Heart left ventricle (tissue), 16 donors: ENCODE measurements at regions of chr1 and their contacts with region 1.

Region 1: DNA sequence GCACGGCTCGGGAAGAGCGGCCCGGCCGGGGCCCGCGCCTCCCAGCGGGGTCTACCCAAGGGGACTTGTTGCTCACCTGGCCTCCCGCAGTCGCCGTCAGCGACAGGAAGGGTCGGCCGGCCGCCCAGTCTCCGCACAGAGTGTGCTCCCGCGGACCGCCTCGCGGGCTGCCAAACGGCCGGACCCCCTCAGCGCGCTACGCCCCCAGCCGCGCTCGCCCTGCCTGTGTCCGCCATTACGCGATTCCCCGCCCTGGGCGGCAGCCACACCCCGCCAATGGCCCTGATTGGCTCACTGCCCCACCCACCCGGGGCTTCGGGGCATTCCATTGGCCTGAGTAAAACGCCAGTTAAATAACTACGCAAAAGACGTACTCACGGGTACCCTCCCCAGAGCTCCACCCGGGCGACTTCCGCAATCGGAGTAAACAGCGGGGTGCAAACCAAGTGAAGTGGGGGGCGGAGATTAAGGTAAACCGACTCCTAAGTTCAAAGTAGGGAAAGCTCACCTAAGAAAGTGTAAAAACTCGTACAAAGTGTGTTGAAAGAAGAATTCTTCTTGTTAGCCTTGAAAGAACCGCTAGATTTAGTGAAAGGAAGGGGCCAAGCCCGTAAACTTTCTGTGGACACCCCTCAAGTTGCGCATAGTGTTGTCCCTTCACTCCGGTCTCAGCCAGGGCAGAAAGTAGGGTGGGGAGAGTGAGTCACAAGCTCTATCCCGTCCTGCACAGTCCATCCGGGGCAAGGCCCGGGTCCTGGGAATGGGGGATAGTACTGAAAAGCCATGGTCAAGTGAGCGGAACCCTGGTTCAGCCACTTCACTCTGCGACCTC is at the start of gene WASF2:
- DNase-seq: peak; percentile 97 to 98 (median 98)
- ATAC-seq: peak; percentile 93 to 97 (median 96)
- H3K4me3 ChIP-seq: peak within 1 kb of the TSS; percentile 77 to 100 (median 96)
- H3K27ac ChIP-seq: peak within 1 kb of the TSS; percentile 98 to 100 (median 100)
- H3K4me1 ChIP-seq: peaks cover 5 to 62% (median 37%) of the 10 kb centered on the region in 12 donors
- H3K27me3 ChIP-seq: no peaks in the 10 kb centered on the region
- CTCF ChIP-seq: peak in 1 of 12 donors; percentile 5
- POLR2A ChIP-seq: peak; percentile 83 to 96
- total RNA-seq, gene WASF2: 27.5 to 103 (median 47.9) TPM

Region 2: DNA sequence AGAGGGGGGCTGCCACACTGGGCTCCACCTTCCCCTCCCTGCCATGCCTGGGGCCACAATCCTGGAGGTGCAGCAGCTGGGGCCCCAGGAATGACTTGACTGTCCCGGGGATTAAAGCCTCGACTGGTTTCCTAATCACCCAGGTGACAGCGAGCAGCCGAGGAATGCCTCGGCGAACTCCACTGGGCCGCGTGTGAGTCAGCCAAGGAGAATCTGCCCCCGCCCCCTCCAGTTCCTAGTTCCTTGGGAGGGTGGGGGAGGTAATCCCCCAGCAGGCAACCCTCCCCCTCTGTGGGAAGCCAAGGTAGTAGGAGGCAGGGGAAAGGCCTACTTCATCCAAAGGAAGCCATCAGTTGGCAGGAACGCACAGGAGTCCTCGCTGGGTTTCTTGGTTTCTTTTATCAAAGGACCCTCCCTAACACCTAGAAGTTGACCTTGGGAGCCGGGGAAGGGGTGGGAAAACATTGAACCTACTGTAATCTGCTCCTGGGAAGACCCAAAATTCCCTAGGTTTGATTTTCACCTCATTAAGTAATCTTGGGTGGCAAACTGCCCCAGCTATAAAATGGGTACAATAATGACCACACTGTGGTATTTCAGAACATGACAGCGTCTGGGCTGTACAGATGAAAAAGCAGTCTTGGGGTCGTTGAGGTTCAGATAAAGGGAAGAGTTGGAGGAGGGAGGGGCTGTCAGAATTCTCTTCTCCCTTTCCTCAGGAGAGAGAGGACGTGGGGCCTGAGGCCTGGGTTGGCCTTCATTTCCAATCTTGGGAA is 478.9 kb before region 1 on chr1:
- intact Hi-C with region 1: no loop called
- DNase-seq: peak in 2 of 5 donors; percentile 34 to 56
- ATAC-seq: no peak
- H3K4me3 ChIP-seq: peak overlapping the region in 10 of 12 donors; percentile 24 to 64 (median 54)
- H3K27ac ChIP-seq: peak overlapping the region in 11 of 12 donors; percentile 39 to 92 (median 82)
- H3K4me1 ChIP-seq: peaks cover 0 to 51% (median 16%) of the 10 kb centered on the region in 12 donors
- H3K27me3 ChIP-seq: no peaks in the 10 kb centered on the region
- CTCF ChIP-seq: no peak
- POLR2A ChIP-seq: no peak

Region 3: DNA sequence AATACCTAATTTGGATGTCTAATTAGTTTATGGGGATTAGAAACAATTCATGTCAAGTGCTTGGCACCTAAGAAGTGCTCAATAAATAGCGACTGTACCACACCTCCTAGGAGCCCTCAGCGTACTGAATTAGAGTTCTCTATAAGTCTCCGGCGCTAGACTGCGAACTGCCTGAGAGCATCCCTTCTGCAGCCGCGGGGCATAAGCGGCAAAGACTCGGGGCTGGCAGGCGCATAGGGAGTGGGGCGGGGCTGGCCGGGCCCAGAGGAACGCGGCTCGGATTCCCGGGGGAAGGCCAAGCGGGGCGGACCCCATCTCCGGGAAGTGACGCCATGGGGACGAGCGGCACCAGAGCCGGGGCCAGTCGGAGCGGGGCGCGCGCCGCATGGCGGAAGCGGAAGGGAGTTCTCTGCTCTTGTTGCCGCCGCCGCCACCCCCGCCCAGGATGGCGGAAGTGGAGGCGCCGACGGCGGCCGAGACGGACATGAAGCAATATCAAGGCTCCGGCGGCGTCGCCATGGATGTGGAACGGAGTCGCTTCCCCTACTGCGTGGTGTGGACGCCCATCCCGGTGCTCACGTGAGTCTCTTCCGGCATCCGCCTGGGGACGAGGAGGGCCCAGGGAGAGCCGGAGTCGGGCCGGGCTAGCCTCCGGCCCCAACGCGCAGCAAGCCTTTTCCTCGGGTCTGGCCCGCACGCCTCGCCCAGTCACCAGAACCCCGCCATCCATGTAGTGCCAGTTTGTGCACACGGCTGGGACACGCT is 168.1 kb before region 1 on chr1 and contains the start of gene TMEM222:
- intact Hi-C with region 1: no loop called
- DNase-seq: peak; percentile 98 to 99 (median 98)
- ATAC-seq: peak; percentile 96 to 99 (median 98)
- H3K4me3 ChIP-seq: peak within 1 kb of the TSS; percentile 68 to 100 (median 80)
- H3K27ac ChIP-seq: peak within 1 kb of the TSS; percentile 84 to 95 (median 90)
- H3K4me1 ChIP-seq: peaks cover 5 to 48% (median 33%) of the 10 kb centered on the region in 12 donors
- H3K27me3 ChIP-seq: peaks cover 0 to 5% (median 0%) of the 10 kb centered on the region in 9 donors
- CTCF ChIP-seq: peak in 9 of 12 donors; percentile 10 to 50 (median 18)
- POLR2A ChIP-seq: peak in 1 of 2 donors; percentile 66
- total RNA-seq, gene TMEM222: 18.1 to 32.5 (median 25.9) TPM

Region 4: GRCh38 chr1:27430903-27431600 is 59.1 kb before region 1 on chr1:
- intact Hi-C with region 1: loop called in 9 of 10 experiments (anchors 2 to 10 kb)
- DNase-seq: peak in 1 of 5 donors; percentile 44
- ATAC-seq: peak; percentile 27 to 53 (median 42)
- H3K4me3 ChIP-seq: peak overlapping the region in 7 of 12 donors; percentile 2 to 26 (median 5)
- H3K27ac ChIP-seq: peak overlapping the region; percentile 82 to 94 (median 86)
- H3K4me1 ChIP-seq: peaks cover 35 to 100% (median 93%) of the 10 kb centered on the region in 12 donors
- H3K27me3 ChIP-seq: no peaks in the 10 kb centered on the region
- CTCF ChIP-seq: peak in 5 of 12 donors; percentile 12 to 42 (median 28)
- POLR2A ChIP-seq: no peak

Region 5: DNA sequence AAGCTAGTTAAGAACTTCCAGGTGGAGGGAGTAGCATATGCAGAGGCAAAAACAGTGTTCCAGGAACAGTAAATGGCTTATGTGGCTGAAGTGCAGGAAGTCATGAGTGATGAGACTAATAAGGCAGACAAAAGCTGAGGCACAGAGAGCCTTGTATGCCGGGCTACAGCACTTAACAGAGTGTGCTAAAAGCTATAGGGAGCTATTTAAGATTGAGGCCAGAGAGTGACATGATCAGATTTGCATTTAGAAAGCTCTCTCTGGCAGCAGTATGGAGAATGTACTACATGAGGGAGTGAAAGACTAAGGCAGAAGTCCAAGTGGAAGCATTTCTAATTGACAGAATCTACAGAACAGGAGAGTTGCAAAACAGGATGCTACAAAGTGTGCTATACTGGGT is 38.8 kb before region 1 on chr1:
- intact Hi-C with region 1: loop called in 1 of 10 experiments (anchors 5 kb)
- DNase-seq: no peak
- ATAC-seq: no peak
- H3K4me3 ChIP-seq: no peak overlapping the region
- H3K27ac ChIP-seq: peak overlapping the region in 2 of 12 donors; percentile 9 to 48
- H3K4me1 ChIP-seq: peaks cover 4 to 69% (median 49%) of the 10 kb centered on the region in 12 donors
- H3K27me3 ChIP-seq: no peaks in the 10 kb centered on the region
- CTCF ChIP-seq: no peak
- POLR2A ChIP-seq: no peak

Region 6: GRCh38 chr1:27556781-27557595 is 66.9 kb after region 1 on chr1:
- intact Hi-C with region 1: loop called in 1 of 10 experiments (anchors 5 kb)
- DNase-seq: peak; percentile 93 to 96 (median 96)
- ATAC-seq: peak; percentile 21 to 76 (median 72)
- H3K4me3 ChIP-seq: peak overlapping the region in 9 of 12 donors; percentile 15 to 40 (median 32)
- H3K27ac ChIP-seq: peak overlapping the region; percentile 77 to 96 (median 90)
- H3K4me1 ChIP-seq: peaks cover 4 to 77% (median 66%) of the 10 kb centered on the region in 12 donors
- H3K27me3 ChIP-seq: no peaks in the 10 kb centered on the region
- CTCF ChIP-seq: peak; percentile 88 to 98 (median 95)
- POLR2A ChIP-seq: no peak

Region 7: DNA sequence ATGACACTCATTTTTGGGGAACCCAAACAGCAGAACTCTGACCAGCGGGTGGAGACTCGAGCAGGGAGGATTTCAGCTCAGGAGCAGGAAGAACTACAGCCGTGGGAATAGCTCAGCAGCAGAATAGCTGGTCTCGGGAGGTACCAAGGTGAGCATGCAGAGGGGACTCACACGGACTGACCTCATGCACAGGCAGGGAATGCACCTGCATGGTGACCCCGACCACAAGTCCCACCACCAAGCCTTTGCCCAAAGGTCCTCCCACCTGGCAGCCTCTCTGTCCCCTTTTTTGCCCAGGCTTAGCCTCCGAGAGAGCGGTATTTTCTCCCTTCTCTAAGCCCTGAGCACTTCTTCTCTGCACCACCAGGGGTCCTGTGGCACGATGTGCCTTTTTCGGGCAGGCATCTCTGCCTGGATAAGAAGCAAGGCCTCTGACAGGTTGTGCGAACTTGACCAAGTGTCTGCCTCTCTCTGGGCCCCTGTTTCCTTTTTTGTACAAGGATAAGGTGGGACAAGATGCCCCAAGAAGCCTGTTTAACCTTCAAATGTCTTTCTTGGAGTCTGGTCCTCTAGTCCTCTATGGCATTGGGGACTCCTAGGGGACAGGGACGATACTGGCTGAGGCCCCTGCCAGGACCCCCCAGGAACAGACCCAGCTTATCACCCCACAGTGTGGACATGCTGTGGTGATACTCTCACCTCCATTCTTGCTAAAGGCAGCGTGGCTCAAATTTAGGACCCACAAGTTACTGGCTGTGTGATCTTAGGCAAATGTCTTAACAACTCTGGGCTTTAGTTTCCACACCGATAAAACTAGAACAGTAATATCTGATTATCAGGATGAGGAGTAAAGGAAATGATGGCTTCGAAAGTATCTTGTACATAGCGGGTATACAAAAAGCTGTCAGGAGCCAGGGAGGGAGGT is 153.8 kb after region 1 on chr1:
- intact Hi-C with region 1: no loop called
- DNase-seq: peak in 3 of 5 donors; percentile 64 to 73 (median 71)
- ATAC-seq: peak in 3 of 4 donors; percentile 65 to 77 (median 73)
- H3K4me3 ChIP-seq: no peak overlapping the region
- H3K27ac ChIP-seq: no peak overlapping the region
- H3K4me1 ChIP-seq: peaks cover 0 to 36% (median 13%) of the 10 kb centered on the region in 12 donors
- H3K27me3 ChIP-seq: no peaks in the 10 kb centered on the region
- CTCF ChIP-seq: peak; percentile 71 to 85 (median 77)
- POLR2A ChIP-seq: no peak